Right cardiac atrium (tissue), 5 donors: ENCODE measurements at regions of chr5 and their contacts with region 1.

Region 1: GRCh38 chr5:142716963-142717362 is 31.1 kb upstream of the FGF1 start:
- DNase-seq: peak; percentile 48 to 76 (median 70)
- ATAC-seq: peak; percentile 60 to 64
- H3K4me3 ChIP-seq: no peak overlapping the region
- H3K27ac ChIP-seq: peak overlapping the region; percentile 87
- H3K4me1 ChIP-seq: no peaks in the 10 kb centered on the region
- H3K27me3 ChIP-seq: no peaks in the 10 kb centered on the region

Region 2: DNA sequence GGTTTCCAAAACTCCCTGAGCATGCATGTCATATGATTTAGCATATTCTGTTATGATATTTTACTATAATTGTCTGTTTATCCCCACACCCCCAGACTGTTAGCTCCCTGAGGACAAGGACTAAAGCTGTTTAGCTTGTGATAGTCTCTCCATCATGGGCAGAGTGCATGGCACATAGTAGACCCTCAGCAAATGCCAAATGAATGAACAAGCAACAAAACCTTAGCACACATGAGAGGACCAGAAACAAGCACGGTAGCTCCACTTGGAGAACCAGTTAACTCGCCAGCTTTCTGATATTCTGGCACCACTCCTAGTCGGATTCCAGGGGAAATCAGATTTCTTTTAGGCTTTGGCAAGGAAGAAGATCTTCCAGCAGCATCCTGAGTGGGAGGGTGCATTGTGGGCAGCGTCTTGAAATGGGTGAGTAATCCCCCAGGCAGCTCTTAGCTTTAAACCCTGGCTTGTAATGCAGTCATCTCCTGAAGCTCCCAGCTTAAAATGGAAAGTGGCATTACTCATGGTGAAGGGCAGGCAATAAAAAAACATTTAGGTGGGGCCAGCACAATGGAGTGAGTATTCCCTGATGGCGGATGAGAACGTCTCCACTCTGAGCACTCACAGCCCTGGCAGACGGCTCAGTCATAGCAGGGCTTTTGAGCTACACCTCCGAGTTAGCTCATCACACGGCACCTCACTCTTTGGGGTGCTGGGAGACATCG is 72.2 kb before region 1 on chr5:
- intact Hi-C with region 1: no loop called
- DNase-seq: peak in 1 of 3 donors; percentile 44
- ATAC-seq: peak; percentile 73 to 94
- H3K4me3 ChIP-seq: no peak overlapping the region
- H3K27ac ChIP-seq: no peak overlapping the region
- H3K4me1 ChIP-seq: peaks cover 5% of the 10 kb centered on the region
- H3K27me3 ChIP-seq: no peaks in the 10 kb centered on the region

Region 3: GRCh38 chr5:142783601-142784341 is 66.8 kb after region 1 on chr5:
- intact Hi-C with region 1: no loop called
- DNase-seq: peak; percentile 54 to 80 (median 74)
- ATAC-seq: peak; percentile 67 to 81
- H3K4me3 ChIP-seq: no peak overlapping the region
- H3K27ac ChIP-seq: peak overlapping the region; percentile 90
- H3K4me1 ChIP-seq: peaks cover 29% of the 10 kb centered on the region
- H3K27me3 ChIP-seq: no peaks in the 10 kb centered on the region

Region 4: GRCh38 chr5:142881076-142881783 is 164.3 kb after region 1 on chr5:
- intact Hi-C with region 1: loop called (anchors 2 to 5 kb)
- DNase-seq: peak in 1 of 3 donors; percentile 60
- ATAC-seq: no peak
- H3K4me3 ChIP-seq: no peak overlapping the region
- H3K27ac ChIP-seq: peak overlapping the region; percentile 16
- H3K4me1 ChIP-seq: peaks cover 4% of the 10 kb centered on the region
- H3K27me3 ChIP-seq: no peaks in the 10 kb centered on the region

Region 5: GRCh38 chr5:142888469-142889085 is 171.6 kb after region 1 on chr5:
- intact Hi-C with region 1: loop called in 2 of 4 experiments (anchors 5 kb)
- DNase-seq: no peak
- ATAC-seq: peak; percentile 48 to 72
- H3K4me3 ChIP-seq: no peak overlapping the region
- H3K27ac ChIP-seq: no peak overlapping the region
- H3K4me1 ChIP-seq: peaks cover 5% of the 10 kb centered on the region
- H3K27me3 ChIP-seq: no peaks in the 10 kb centered on the region